HepG2 (cell line): ENCODE measurements at regions of chr3 and their contacts with region 1.

Region 1: GRCh38 chr3:60755096-60755495 is 496.2 kb downstream of the FHIT start:
- DNase-seq: peak; percentile 31
- ATAC-seq: peak; percentile 92
- H3K4me3 ChIP-seq: no peak overlapping the region
- H3K27ac ChIP-seq: no peak overlapping the region
- H3K4me1 ChIP-seq: no peaks in the 10 kb centered on the region
- H3K27me3 ChIP-seq: no peaks in the 10 kb centered on the region
- CTCF ChIP-seq: peak; percentile 79
- EP300 ChIP-seq: no peak
- POLR2A ChIP-seq: no peak
- RAD21 ChIP-seq: 0 out of 2 replicates have a peak, but pooled peaks have one; percentile 35

Region 2: DNA sequence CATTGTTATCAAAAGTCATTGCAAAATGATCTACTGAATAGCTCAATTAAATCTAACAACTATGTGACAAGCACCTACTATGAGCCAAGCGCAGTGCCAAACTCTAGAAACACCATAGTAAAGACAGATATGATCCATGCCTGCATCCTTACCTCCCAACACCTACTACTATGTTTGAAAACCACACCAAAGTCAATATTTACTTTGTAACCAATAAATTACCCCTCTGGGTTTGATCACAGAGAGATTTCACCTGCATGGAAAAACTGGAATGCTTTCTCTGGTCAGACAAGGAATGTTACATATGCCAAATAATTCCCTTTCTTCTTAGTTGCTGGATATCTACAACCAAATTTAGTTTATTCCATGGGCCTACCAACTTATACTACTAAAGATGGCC is 74.0 kb after region 1 on chr3:
- CTCF ChIA-PET with region 1: no interaction called
- POLR2A ChIA-PET with region 1: no interaction called
- in situ Hi-C with region 1: no loop called
- intact Hi-C with region 1: no loop called
- DNase-seq: no peak
- ATAC-seq: no peak
- H3K4me3 ChIP-seq: no peak overlapping the region
- H3K27ac ChIP-seq: no peak overlapping the region
- H3K4me1 ChIP-seq: no peaks in the 10 kb centered on the region
- H3K27me3 ChIP-seq: no peaks in the 10 kb centered on the region
- CTCF ChIP-seq: no peak
- EP300 ChIP-seq: no peak
- POLR2A ChIP-seq: no peak
- RAD21 ChIP-seq: no peak

Region 3: GRCh38 chr3:60948484-60948883 is 193.4 kb after region 1 on chr3:
- CTCF ChIA-PET with region 1: no interaction called
- POLR2A ChIA-PET with region 1: no interaction called
- in situ Hi-C with region 1: no loop called
- intact Hi-C with region 1: loop called (anchors 10 kb)
- DNase-seq: no peak
- ATAC-seq: no peak
- H3K4me3 ChIP-seq: no peak overlapping the region
- H3K27ac ChIP-seq: no peak overlapping the region
- H3K4me1 ChIP-seq: no peaks in the 10 kb centered on the region
- H3K27me3 ChIP-seq: no peaks in the 10 kb centered on the region
- CTCF ChIP-seq: no peak
- EP300 ChIP-seq: no peak
- POLR2A ChIP-seq: no peak
- RAD21 ChIP-seq: no peak

Region 4: DNA sequence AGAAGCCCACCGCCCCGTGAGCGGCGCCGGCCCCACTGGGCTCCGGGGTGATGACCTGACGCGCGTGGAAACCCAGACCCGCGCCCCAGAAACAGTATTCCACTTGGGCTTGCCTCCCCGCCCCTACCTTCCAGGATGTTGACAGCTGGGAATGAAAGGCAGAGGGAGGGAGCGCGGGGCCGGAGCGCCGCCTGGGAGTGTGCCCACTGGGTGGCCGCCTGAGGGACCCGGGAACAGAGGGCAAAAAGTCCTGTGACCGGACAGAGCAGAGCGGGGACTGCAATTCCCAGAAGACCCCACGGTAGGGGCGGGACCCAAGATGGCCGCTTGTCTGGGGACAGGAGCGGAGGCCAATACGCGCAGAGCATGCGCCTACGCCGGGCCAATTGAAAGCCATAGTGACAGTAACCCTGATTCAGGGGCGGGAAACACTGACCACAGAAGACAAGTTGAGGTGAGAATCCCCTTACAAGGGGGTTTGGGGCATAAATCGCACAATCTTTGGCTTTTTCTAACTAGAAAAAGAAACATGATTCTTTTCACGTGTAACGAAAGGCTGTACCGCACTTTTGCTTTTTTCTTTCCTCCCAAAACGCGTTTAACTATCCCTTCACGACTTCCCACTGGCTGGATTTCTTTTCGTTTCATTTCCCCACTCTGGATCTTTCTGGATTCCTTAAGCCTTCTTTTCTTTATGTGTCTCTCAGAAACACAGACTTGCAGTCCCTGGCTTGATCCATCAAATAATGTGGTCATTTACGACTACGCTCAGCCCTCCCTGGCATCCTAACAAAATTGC is 496.3 kb after region 1 on chr3 and contains the start of gene FHIT:
- CTCF ChIA-PET with region 1: no interaction called
- POLR2A ChIA-PET with region 1: no interaction called
- in situ Hi-C with region 1: no loop called
- intact Hi-C with region 1: loop called (anchors 5 kb)
- DNase-seq: peak; percentile 94
- ATAC-seq: peak; percentile 97
- H3K4me3 ChIP-seq: peak within 1 kb of the TSS; percentile 67 to 88 (median 76)
- H3K27ac ChIP-seq: peak within 1 kb of the TSS; percentile 52
- H3K4me1 ChIP-seq: peaks cover 23% of the 10 kb centered on the region
- H3K27me3 ChIP-seq: no peaks in the 10 kb centered on the region
- CTCF ChIP-seq: peak; percentile 63
- EP300 ChIP-seq: no peak
- POLR2A ChIP-seq: peak; percentile 44 to 63; a peak in 3 of 4 replicates
- RAD21 ChIP-seq: peak; percentile 53
- total RNA-seq, gene FHIT: 4.0 and 4.1 TPM in 2 replicates

Region 5: GRCh38 chr3:61299343-61300005 is 544.4 kb after region 1 on chr3:
- CTCF ChIA-PET with region 1: no interaction called
- POLR2A ChIA-PET with region 1: no interaction called
- in situ Hi-C with region 1: no loop called
- intact Hi-C with region 1: loop called (anchors 1 kb)
- DNase-seq: peak; percentile 24
- ATAC-seq: peak; percentile 84
- H3K4me3 ChIP-seq: no peak overlapping the region
- H3K27ac ChIP-seq: no peak overlapping the region
- H3K4me1 ChIP-seq: no peaks in the 10 kb centered on the region
- H3K27me3 ChIP-seq: no peaks in the 10 kb centered on the region
- CTCF ChIP-seq: peak; percentile 29
- EP300 ChIP-seq: no peak
- POLR2A ChIP-seq: no peak
- RAD21 ChIP-seq: no peak

Region 6: DNA sequence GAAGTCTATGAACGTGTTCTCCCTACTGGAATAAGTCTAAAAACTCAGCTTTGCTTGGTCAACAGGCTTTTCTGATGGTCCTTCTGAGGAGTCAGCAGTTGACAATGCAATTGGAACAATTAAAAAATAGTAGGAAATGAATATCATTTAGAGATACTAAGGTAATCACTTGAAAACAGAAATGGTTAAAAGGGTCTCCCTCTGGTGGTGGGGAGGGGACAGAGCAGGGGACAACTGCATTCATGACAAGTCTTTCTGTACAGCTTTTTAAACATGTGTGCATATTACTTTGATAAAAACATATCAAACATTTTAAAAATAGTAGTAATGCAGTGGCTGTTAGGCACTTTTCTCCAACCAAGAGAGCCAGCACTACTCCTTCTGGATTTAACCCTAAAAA is 616.0 kb after region 1 on chr3:
- CTCF ChIA-PET with region 1: interaction called, 9 read pairs
- POLR2A ChIA-PET with region 1: no interaction called
- in situ Hi-C with region 1: loop called (anchors 10 kb)
- intact Hi-C with region 1: loop called (anchors 1 kb)
- DNase-seq: peak; percentile 10
- ATAC-seq: peak; percentile 56; the same call in 2 of the 3 replicates
- H3K4me3 ChIP-seq: no peak overlapping the region
- H3K27ac ChIP-seq: no peak overlapping the region
- H3K4me1 ChIP-seq: no peaks in the 10 kb centered on the region
- H3K27me3 ChIP-seq: no peaks in the 10 kb centered on the region
- CTCF ChIP-seq: peak; percentile 61
- EP300 ChIP-seq: no peak
- POLR2A ChIP-seq: no peak
- RAD21 ChIP-seq: peak; percentile 35; the same call in 1 of the 2 replicates

Region 7: DNA sequence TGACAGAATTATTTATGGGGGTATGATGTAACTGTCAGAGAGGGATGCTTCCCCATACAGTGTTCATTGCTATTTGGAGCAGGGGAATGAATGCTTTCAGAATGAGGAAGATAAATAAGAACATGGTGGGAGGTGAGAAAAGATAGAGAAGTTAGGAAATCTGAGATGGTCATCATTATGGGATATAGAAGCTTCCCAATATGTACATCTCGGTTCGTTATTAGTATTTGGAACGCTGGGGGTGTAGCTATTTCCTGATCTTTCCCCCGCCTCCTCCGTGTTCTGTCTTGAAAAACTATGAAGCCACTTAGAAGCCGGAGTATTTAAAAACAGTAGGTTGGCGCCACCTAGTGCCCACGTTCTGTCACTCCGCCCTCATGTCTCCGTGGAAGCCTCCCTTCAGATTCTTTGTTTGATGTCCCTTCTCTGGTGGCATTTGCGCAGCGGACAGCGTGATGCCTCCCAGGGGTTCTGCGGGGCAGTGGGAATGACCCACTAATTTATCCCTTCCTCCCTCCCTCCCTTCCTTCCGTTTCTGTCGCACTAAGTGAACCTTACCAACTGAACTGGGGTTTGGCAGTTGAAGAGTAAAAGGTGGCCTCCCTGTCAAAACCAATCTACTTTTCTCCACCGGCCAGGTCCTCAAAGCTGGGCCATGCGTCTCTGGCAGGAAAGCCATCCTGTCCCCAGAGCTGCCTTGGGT is 1433.7 kb after region 1 on chr3:
- CTCF ChIA-PET with region 1: no interaction called
- POLR2A ChIA-PET with region 1: no interaction called
- in situ Hi-C with region 1: no loop called
- intact Hi-C with region 1: loop called (anchors 10 kb)
- DNase-seq: peak; percentile 48
- ATAC-seq: peak; percentile 63
- H3K4me3 ChIP-seq: no peak overlapping the region
- H3K27ac ChIP-seq: no peak overlapping the region
- H3K4me1 ChIP-seq: peaks cover 21% of the 10 kb centered on the region
- H3K27me3 ChIP-seq: no peaks in the 10 kb centered on the region
- CTCF ChIP-seq: peak; percentile 82
- EP300 ChIP-seq: no peak
- POLR2A ChIP-seq: no peak
- RAD21 ChIP-seq: peak; percentile 66; the same call in 1 of the 2 replicates